ENCODE measurements at regions of chr21 and their contacts with region 1.

Region 1: GRCh38 chr21:34510148-34511142 is 1.6 kb downstream of the KCNE1 start:
- DNase-seq: peak; percentile 82
- ATAC-seq: peak; percentile 92
- H3K4me3 Mint-ChIP-seq: no peak overlapping the region
- H3K27ac Mint-ChIP-seq: no peak overlapping the region
- H3K4me1 Mint-ChIP-seq: no peaks in the 10 kb centered on the region
- H3K27me3 Mint-ChIP-seq: peaks cover 2% of the 10 kb centered on the region
- CTCF ChIP-seq: peak; percentile 59

Region 2: GRCh38 chr21:34073032-34073869 is 437.2 kb before region 1 on chr21 and contains the starts of genes MRPS6 and SLC5A3:
- CTCF ChIA-PET with region 1: no interaction called
- POLR2A ChIA-PET with region 1: no interaction called
- intact Hi-C with region 1: no loop called
- DNase-seq: peak; percentile 74
- ATAC-seq: peak; percentile 69
- H3K4me3 Mint-ChIP-seq: peak within 1 kb of the TSS; percentile 95
- H3K27ac Mint-ChIP-seq: peak within 1 kb of the TSS; percentile 91
- H3K4me1 Mint-ChIP-seq: peaks cover 37% of the 10 kb centered on the region
- H3K27me3 Mint-ChIP-seq: no peaks in the 10 kb centered on the region
- CTCF ChIP-seq: no peak
- total RNA-seq, gene MRPS6: 93.9 to 95.2 TPM
- total RNA-seq, gene SLC5A3: 21.1 to 21.9 TPM

Region 3: GRCh38 chr21:34498623-34499022 is 11.8 kb before region 1 on chr21:
- CTCF ChIA-PET with region 1: interaction called, 20 read pairs
- POLR2A ChIA-PET with region 1: no interaction called
- intact Hi-C with region 1: no loop called
- DNase-seq: no peak
- ATAC-seq: no peak
- H3K4me3 Mint-ChIP-seq: no peak overlapping the region
- H3K27ac Mint-ChIP-seq: no peak overlapping the region
- H3K4me1 Mint-ChIP-seq: no peaks in the 10 kb centered on the region
- H3K27me3 Mint-ChIP-seq: peaks cover 9% of the 10 kb centered on the region
- CTCF ChIP-seq: no peak

Region 4: DNA sequence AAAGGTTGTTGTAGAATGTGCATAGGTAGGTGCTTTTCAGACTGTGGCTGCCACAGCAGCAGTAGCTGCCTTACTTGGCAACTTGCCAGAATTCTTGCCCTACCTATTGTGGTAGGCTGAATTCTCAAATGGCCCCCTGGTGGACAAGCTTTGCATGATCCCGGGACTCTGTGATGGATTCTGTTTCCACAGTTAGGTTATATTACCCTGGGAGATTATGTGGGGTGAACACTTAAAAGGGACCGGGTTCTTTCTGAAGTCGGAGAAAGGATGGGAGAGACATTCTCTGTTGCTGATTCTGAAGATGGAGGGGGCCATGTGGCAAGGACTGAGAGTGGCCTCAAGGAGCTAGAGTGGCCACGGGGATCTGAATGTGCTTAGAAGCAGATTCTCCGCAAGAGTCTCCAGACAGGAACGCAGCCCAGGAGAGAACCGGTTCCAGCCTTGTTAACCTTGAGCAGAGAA is 33.6 kb after region 1 on chr21:
- CTCF ChIA-PET with region 1: interaction called, 10 read pairs
- POLR2A ChIA-PET with region 1: no interaction called
- intact Hi-C with region 1: no loop called
- DNase-seq: peak; percentile 60
- ATAC-seq: peak; percentile 34
- H3K4me3 Mint-ChIP-seq: no peak overlapping the region
- H3K27ac Mint-ChIP-seq: no peak overlapping the region
- H3K4me1 Mint-ChIP-seq: peaks cover 13% of the 10 kb centered on the region
- H3K27me3 Mint-ChIP-seq: no peaks in the 10 kb centered on the region
- CTCF ChIP-seq: peak; percentile 24

Region 5: GRCh38 chr21:34582506-34583150 is 72.2 kb after region 1 on chr21:
- CTCF ChIA-PET with region 1: interaction called, 10 read pairs
- POLR2A ChIA-PET with region 1: no interaction called
- intact Hi-C with region 1: no loop called
- DNase-seq: peak; percentile 19
- ATAC-seq: peak; percentile 67
- H3K4me3 Mint-ChIP-seq: no peak overlapping the region
- H3K27ac Mint-ChIP-seq: peak overlapping the region; percentile 9
- H3K4me1 Mint-ChIP-seq: peaks cover 17% of the 10 kb centered on the region
- H3K27me3 Mint-ChIP-seq: no peaks in the 10 kb centered on the region
- CTCF ChIP-seq: no peak